ENCODE measurements at regions of chr11 and their contacts with region 1.

Region 1: DNA sequence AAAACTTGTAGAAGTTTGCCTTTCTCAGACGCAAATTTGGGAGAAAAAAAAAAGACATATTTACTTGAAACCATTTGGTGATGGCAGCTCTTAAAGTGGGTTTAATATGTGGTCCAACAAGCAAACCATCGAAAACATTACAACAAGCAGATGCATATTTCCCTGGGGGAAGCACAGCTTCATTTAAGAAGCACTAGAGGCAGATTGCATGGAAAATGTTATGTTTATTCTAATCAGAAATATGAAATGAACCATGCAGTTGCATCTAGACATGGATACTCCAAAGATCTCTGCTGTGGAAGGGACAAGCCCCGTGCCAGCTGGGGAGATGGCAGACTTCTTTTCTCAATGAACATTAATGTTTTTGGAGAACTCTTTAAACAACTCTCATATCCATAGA is 57.4 kb upstream of the PARVA start:
- DNase-seq: no peak
- ATAC-seq: no peak
- H3K4me3 ChIP-seq: no peak overlapping the region
- H3K27ac ChIP-seq: no peak overlapping the region
- H3K4me1 ChIP-seq: peaks cover 0 to 13% (median 0%) of the 10 kb centered on the region in 9 donors
- H3K27me3 ChIP-seq: no peaks in the 10 kb centered on the region
- CTCF ChIP-seq: no peak

Region 2: DNA sequence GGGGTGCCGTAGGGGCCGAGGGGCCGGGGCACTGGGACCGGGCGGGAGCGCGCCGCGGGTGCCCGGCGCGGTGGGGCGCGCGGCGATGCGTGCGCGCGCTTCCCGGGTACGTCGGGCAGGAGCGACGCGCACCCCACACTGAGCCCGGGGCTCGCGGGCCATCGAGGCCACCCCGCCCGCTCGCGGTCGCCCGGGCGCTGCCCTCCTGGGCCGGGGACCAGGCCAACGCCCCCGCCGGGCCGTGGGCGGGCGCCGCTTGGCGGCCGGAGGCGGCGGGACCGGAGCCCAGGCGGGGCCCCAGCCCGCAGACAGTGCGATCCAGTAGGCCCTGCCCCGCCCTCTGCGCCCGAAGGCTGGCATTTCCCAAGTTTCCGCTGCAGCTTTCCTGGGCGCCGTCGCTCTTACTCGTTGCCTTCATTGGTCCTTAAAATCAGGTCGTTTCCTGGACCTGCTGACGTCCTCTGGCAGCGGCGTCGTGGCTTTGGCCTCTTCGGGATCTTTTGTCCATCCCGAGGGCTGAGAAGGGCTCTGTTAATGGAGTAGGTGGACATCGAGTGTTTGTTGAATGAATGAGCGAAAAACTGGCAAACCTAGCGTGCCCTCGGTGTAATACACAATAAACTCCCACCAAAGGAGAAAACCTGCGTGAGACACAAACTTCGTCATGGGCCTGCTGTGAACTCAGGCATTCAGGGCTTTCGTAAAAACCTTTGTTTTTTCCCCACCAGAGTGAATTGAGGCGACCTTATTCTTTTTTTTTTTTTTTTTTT is 58.0 kb after region 1 on chr11:
- intact Hi-C with region 1: no loop called
- DNase-seq: peak; percentile 51 to 74
- ATAC-seq: peak; percentile 54 to 88 (median 68)
- H3K4me3 ChIP-seq: peak overlapping the region; percentile 56 to 97 (median 72)
- H3K27ac ChIP-seq: peak overlapping the region; percentile 93 to 99 (median 98)
- H3K4me1 ChIP-seq: peaks cover 5 to 76% (median 49%) of the 10 kb centered on the region in 9 donors
- H3K27me3 ChIP-seq: peaks cover 0 to 28% (median 0%) of the 10 kb centered on the region in 7 donors
- CTCF ChIP-seq: peak in 4 of 9 donors; percentile 18 to 43 (median 34)

Region 3: GRCh38 chr11:12485328-12485727 is 165.3 kb after region 1 on chr11:
- intact Hi-C with region 1: loop called in 2 of 10 experiments (anchors 10 kb)
- DNase-seq: no peak
- ATAC-seq: no peak
- H3K4me3 ChIP-seq: no peak overlapping the region
- H3K27ac ChIP-seq: no peak overlapping the region
- H3K4me1 ChIP-seq: peaks cover 2 to 22% (median 14%) of the 10 kb centered on the region in 9 donors
- H3K27me3 ChIP-seq: no peaks in the 10 kb centered on the region
- CTCF ChIP-seq: peak in 8 of 9 donors; percentile 13 to 44 (median 32)